ENCODE measurements at regions of chr7 and their contacts with region 1.

Region 1: DNA sequence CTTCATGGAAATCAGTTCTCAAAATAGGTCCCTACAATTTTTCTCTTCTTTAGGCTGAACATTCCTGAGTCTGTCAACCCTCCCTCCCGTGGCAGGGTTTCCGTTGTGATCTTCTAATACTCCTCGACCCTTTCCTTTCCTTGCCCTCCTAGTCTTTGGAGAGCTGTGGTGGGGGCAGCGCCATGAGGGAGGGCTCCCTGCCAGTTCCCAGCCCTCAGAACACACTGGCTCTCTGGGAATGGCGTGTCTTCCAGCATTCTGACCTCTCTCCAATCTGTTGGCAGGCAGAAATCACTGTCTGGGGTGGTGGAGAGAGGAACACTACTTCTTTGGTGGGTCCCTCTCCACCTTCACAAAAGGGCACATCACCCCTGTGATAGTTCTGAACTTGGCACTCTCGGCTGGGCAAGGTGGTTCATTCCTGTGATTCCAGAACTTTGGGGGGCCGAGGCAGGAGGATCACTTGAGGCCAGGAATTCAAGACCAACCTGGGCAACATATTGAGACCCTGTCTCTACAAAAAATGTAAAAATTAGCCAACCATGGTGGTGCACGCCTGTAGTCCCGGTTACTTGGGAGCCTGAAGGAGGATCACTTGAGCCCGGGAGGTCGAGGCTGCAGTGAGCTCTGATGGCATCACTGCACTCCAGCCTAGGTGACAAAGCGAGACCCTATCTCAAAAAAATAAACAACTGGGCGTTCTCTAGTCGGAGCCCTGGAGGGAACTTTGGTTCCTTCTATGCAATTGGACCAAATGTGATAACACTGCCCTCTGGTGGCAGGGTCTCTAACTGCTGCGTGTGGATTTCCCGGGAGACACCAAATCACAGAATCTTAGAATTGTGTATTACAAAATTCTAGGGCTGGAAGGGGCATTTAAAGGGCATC is 13.1 kb upstream of the ARPC1A start:
- DNase-seq: peak; percentile 89

Region 2: DNA sequence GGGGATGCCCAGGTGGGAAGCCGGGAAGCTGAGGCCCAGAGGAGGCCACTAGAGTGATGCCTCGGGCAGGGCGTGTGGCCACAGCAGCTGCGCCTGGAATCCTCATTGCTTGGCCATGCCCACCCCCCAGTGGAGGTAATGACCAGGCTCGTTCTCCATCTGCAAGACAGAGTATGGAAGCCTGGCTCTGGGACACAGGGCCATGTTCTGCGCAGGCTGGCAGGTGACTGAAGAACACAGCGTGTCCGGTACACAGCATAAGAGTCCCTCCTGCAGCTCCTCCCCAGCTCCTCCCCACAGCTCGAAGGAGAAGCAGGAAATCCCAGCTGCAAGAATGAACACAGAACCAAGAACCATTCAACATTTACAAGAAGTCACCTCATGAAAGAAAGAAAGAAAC is 233.5 kb before region 1 on chr7:
- in situ Hi-C with region 1: loop called (anchors 25 kb)
- DNase-seq: no peak

Region 3: DNA sequence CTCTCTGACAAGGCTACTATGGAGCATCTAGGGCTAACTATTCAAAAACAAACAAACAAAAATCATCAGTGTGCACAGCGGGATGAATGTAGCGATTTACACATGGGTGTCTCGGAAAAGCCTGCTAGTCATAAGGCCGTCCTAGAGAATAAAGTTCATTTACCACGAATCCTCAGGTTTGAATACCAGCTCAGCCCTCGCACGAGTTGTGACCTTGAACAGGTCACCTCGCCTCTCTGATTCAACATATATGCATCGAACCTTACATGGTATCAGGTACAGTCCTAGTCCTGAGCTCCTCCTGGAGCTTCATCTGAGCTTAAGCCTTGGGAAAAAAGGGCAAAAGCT is 152.8 kb after region 1 on chr7:
- in situ Hi-C with region 1: no loop called
- DNase-seq: no peak

Region 4: DNA sequence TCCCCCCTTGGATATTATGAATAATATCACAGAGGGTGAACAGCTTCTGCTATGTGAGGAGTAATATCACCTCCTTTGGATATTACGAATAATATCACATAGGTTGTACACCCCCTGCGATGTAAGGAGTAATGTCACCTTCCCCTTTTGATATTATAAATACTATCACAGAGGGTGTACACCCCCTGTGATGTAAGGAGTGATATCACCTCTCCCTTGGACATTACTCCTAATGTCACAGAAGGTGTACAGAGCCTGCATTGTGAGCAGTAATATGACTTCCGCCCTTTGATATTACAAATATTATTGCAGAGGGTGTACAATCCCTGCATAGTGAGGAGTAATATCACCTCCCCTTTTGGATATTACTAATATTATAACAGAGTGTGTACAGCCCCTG is 276.3 kb after region 1 on chr7:
- in situ Hi-C with region 1: no loop called
- DNase-seq: no peak

Measured in SK-MEL-5 (cell line).